Dendritic cell treated with granulocyte-macrophage colony-stimulating factor and Interleukin-4, amounts not matched to agents 40 ng/mL and 50 ng/mL, for 4 days (primary cell): ENCODE measurements at regions of chr11 and their contacts with region 1.

Region 1: GRCh38 chr11:67482825-67483798 is at the start of gene AIP:
- H3K4me3 Mint-ChIP-seq: peak within 1 kb of the TSS; percentile 91
- H3K27ac Mint-ChIP-seq: peak within 1 kb of the TSS; percentile 96
- H3K4me1 Mint-ChIP-seq: peaks cover 47% of the 10 kb centered on the region
- H3K27me3 Mint-ChIP-seq: peaks cover 3% of the 10 kb centered on the region

Region 2: GRCh38 chr11:66228521-66228920 is 1254.6 kb before region 1 on chr11:
- intact Hi-C with region 1: no loop called
- H3K4me3 Mint-ChIP-seq: no peak overlapping the region
- H3K27ac Mint-ChIP-seq: no peak overlapping the region
- H3K4me1 Mint-ChIP-seq: no peaks in the 10 kb centered on the region
- H3K27me3 Mint-ChIP-seq: no peaks in the 10 kb centered on the region

Region 3: DNA sequence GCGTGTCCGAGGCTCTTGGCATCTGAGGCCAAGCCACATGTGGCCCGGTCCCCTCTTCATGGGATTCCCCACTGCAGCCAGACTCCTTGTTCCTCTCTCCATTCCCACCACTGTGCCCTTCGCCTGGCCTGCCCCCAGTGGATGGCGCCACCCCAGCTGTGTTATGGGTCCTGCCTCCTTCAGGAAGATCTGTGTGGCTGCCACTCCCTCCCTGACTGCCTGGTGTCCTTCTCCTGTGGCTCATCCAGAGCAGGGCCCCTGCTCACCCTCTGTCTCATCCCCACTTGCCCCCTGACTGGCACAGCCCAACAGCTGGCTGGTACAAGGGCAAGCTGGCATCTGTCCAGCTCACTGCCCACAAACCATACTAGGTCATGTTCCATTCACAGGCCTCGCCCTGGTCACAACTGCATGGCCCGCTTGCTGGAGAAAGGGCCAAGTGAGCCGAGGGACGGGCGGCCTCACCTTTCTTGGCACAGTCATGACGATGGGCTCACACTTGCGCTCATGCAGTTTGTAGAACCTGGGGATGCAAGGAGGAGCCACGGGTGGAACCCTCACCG is 43.7 kb before region 1 on chr11:
- intact Hi-C with region 1: loop called (anchors 1 kb)
- H3K4me3 Mint-ChIP-seq: no peak overlapping the region
- H3K27ac Mint-ChIP-seq: peak overlapping the region; percentile 60
- H3K4me1 Mint-ChIP-seq: peaks cover 72% of the 10 kb centered on the region
- H3K27me3 Mint-ChIP-seq: no peaks in the 10 kb centered on the region

Region 4: GRCh38 chr11:67640021-67640757 is 157.1 kb after region 1 on chr11:
- intact Hi-C with region 1: no loop called
- H3K4me3 Mint-ChIP-seq: no peak overlapping the region
- H3K27ac Mint-ChIP-seq: no peak overlapping the region
- H3K4me1 Mint-ChIP-seq: peaks cover 14% of the 10 kb centered on the region
- H3K27me3 Mint-ChIP-seq: peaks cover 18% of the 10 kb centered on the region